CD8-positive, alpha-beta T cell (primary cell): ENCODE measurements at regions of chr2 and their contacts with region 1.

Region 1: GRCh38 chr2:152025678-152026287 is 73.1 kb downstream of the CACNB4 start:
- DNase-seq: peak; percentile 58 to 83 (median 76)
- ATAC-seq: peak; percentile 93
- H3K4me3 ChIP-seq: peak overlapping the region; percentile 30 to 36
- H3K4me3 Mint-ChIP-seq: peak overlapping the region; percentile 78
- H3K27ac ChIP-seq: no peak overlapping the region
- H3K27ac Mint-ChIP-seq: no peak overlapping the region
- H3K4me1 ChIP-seq: no peaks in the 10 kb centered on the region
- H3K4me1 Mint-ChIP-seq: peaks cover 9% of the 10 kb centered on the region
- H3K27me3 ChIP-seq: no peaks in the 10 kb centered on the region
- H3K27me3 Mint-ChIP-seq: peaks cover 4% of the 10 kb centered on the region
- CTCF ChIP-seq: peak; percentile 99

Region 2: GRCh38 chr2:151619337-151619989 is 406.3 kb before region 1 on chr2:
- CTCF ChIA-PET with region 1: no interaction called
- POLR2A ChIA-PET with region 1: no interaction called
- intact Hi-C with region 1: loop called in 1 of 2 experiments (anchors 10 kb)
- DNase-seq: no peak
- ATAC-seq: no peak
- H3K4me3 ChIP-seq: no peak overlapping the region
- H3K4me3 Mint-ChIP-seq: no peak overlapping the region
- H3K27ac ChIP-seq: no peak overlapping the region
- H3K27ac Mint-ChIP-seq: no peak overlapping the region
- H3K4me1 ChIP-seq: no peaks in the 10 kb centered on the region
- H3K4me1 Mint-ChIP-seq: peaks cover 10% of the 10 kb centered on the region
- H3K27me3 ChIP-seq: no peaks in the 10 kb centered on the region
- H3K27me3 Mint-ChIP-seq: no peaks in the 10 kb centered on the region
- CTCF ChIP-seq: no peak

Region 3: DNA sequence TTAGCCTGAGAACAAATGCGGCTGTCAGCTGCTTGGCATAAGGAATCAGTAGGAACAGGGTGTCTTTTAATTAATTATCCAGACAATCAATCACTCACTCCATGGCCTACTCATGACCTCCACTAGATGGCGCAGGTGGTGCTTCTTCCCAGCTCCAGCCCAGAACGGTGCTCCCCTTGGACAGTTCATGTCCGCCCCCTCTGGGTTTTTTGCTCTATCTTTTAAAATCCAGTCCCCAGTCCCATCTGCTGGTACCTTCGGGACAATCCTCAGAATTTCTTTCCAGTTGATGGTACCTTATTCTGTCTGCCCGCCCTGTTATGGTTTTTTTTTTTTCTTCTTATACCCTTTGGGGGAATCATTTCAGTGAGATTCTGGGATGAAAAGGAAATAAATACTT is 26.7 kb before region 1 on chr2:
- CTCF ChIA-PET with region 1: interaction called, 20 read pairs
- POLR2A ChIA-PET with region 1: no interaction called
- intact Hi-C with region 1: loop called in 1 of 2 experiments (anchors 1 kb)
- DNase-seq: peak in 7 of 9 experiments; percentile 23 to 64 (median 36)
- ATAC-seq: peak; percentile 61
- H3K4me3 ChIP-seq: no peak overlapping the region
- H3K4me3 Mint-ChIP-seq: no peak overlapping the region
- H3K27ac ChIP-seq: no peak overlapping the region
- H3K27ac Mint-ChIP-seq: no peak overlapping the region
- H3K4me1 ChIP-seq: no peaks in the 10 kb centered on the region
- H3K4me1 Mint-ChIP-seq: no peaks in the 10 kb centered on the region
- H3K27me3 ChIP-seq: no peaks in the 10 kb centered on the region
- H3K27me3 Mint-ChIP-seq: peaks cover 2% of the 10 kb centered on the region
- CTCF ChIP-seq: peak; percentile 76

Region 4: GRCh38 chr2:152012697-152013096 is 13.1 kb before region 1 on chr2:
- CTCF ChIA-PET with region 1: interaction called, 36 read pairs
- POLR2A ChIA-PET with region 1: no interaction called
- intact Hi-C with region 1: no loop called
- DNase-seq: no peak
- ATAC-seq: no peak
- H3K4me3 ChIP-seq: no peak overlapping the region
- H3K4me3 Mint-ChIP-seq: no peak overlapping the region
- H3K27ac ChIP-seq: no peak overlapping the region
- H3K27ac Mint-ChIP-seq: no peak overlapping the region
- H3K4me1 ChIP-seq: no peaks in the 10 kb centered on the region
- H3K4me1 Mint-ChIP-seq: no peaks in the 10 kb centered on the region
- H3K27me3 ChIP-seq: peaks cover 3% of the 10 kb centered on the region in 2 experiments
- H3K27me3 Mint-ChIP-seq: peaks cover 26% of the 10 kb centered on the region
- CTCF ChIP-seq: no peak